Mucosa of descending colon (tissue), 3 donors: ENCODE measurements at regions of chr5 and their contacts with region 1.

Region 1: DNA sequence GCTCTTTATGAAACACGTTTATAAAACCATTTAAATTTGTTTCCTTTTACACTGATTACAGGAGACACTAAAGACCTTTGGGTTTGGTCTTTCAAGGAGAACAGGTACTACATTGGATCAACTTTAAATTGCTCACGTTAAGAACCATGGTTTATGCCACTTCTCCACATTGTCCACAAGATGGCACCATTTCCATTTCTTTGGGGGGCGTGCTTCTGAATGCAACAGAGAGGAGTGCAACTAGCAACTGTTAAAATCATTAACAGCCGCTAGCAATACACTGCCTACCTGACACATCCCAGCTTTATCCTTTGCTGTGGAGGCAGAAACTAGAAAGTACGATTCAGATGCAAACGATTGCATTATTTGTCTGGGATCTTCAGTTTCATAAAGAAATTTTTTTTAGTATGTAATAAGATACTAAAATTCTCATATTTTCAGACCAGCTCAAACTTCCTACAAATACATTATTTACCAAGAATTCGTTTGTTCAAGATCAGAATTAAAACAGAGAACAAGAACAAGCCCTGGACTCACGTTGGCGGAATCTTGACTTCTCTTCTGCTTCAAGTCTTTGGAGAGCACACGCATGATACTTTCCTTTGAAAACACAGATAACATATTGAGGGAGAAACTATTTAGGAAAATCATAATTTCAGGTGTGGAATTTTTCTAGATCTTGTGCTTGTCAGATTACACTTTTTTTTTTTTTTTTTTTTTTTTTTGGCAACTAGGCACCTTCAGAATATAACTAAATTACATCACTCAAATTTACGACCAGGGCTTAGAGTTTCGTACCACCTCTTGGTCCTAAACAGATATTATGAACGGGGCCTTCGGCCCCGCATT is 702 bp downstream of the CDC20B start:
- DNase-seq: peak in 1 of 3 donors; percentile 41
- ATAC-seq: peak; percentile 71
- H3K4me3 ChIP-seq: no peak overlapping the region
- H3K4me1 ChIP-seq: peaks cover 27% of the 10 kb centered on the region
- CTCF ChIP-seq: peak; percentile 56

Region 2: DNA sequence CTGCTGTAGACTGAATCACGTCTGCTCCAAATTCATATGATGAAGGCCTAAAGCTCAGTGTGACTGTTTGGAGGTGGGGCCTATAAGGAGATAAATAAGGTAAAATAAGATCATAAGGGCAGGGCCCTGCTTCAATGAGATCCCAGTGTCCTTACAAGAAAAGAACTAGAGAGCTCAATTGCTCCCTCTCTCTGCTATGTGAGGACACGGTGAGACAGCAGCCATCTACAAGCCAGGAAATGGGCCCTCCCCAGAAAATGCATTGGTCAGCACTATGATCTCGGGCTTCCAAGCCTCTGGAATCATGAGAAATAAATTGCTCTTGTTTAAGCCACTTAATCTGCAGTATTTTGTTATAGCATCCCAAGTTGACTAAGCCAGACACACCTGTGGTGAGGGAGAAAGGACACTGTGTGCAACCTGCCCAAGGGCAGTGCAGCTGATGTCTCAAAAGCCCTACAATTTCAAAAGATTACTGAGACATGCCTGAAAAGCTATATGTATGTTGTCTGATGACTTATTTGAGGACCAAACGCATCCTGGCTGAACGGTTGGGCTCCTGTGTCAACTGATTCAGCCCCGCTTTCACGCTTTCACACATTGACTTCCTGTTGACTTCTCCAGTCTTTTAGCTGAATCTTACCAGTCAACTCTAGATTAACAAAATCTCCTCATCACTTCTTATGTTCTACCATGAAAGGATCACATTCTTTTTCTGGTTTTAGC is 135.1 kb before region 1 on chr5:
- intact Hi-C with region 1: no loop called
- DNase-seq: peak in 1 of 3 donors; percentile 23
- ATAC-seq: peak; percentile 73
- H3K4me3 ChIP-seq: no peak overlapping the region
- H3K4me1 ChIP-seq: no peaks in the 10 kb centered on the region
- CTCF ChIP-seq: no peak

Region 3: GRCh38 chr5:55226027-55226933 is 54.0 kb after region 1 on chr5:
- intact Hi-C with region 1: loop called (anchors 5 to 10 kb)
- DNase-seq: peak; percentile 41 to 69 (median 65)
- ATAC-seq: peak; percentile 73
- H3K4me3 ChIP-seq: no peak overlapping the region
- H3K4me1 ChIP-seq: peaks cover 22% of the 10 kb centered on the region
- CTCF ChIP-seq: no peak

Region 4: DNA sequence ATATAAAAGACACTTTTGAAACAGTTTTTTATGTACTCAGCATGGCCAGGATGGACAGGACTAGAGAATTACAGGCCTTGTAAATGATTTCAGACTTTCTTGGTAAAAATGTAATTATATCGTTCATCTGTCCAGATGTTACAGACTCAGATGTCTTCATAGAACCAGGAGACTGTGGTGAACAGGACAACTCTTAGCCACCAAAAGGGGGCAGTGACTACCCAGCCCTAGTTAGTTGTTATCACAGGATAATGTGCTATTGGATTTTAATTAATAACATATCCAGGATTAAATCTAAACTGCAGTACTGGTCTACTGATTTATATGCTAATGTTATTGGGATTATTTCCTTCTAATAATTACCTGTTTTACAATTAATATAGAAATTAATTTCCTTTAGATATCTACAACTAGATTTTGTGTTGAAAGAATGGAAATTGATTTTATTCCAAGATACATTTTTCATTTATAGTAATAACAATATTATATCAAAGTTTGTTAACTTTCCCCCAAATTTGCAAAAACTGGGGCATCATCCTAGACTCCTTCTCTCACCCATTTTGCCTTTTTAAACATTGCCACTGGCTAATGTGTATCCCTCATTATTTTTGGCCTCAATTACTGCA is 234.9 kb after region 1 on chr5:
- intact Hi-C with region 1: no loop called
- DNase-seq: peak in 1 of 3 donors; percentile 50
- ATAC-seq: peak; percentile 67
- H3K4me3 ChIP-seq: no peak overlapping the region
- H3K4me1 ChIP-seq: peaks cover 7% of the 10 kb centered on the region
- CTCF ChIP-seq: peak; percentile 33